Endothelial cell of umbilical vein (primary cell): ENCODE measurements at regions of chr15 and their contacts with region 1.

Region 1: DNA sequence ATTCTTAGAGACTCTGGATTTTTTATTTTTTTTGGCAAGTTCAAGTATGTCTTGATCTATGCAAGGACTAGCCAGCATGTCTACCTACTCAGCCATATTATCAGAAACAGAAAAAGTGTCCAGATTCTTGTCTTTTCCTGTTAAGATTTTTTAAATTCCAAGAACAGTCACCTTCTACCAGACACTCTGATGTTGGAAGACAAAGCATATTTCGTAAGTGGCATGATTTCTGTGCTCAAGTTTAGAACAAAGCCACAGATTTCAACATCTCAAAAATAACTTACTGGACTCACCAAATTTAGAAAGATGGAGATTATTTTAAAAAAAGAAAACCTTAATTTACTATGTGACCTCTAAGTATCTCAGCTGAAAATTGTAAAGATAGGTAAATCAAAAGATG is 61.9 kb downstream of the GOLGA6L7 start:
- DNase-seq: no peak
- H3K4me3 ChIP-seq: no peak overlapping the region
- H3K27ac ChIP-seq: no peak overlapping the region
- H3K4me1 ChIP-seq: no peaks in the 10 kb centered on the region
- H3K27me3 ChIP-seq: peaks cover 4 to 6% of the 10 kb centered on the region in 2 experiments
- CTCF ChIP-seq: no peak
- POLR2A ChIP-seq: no peak

Region 2: DNA sequence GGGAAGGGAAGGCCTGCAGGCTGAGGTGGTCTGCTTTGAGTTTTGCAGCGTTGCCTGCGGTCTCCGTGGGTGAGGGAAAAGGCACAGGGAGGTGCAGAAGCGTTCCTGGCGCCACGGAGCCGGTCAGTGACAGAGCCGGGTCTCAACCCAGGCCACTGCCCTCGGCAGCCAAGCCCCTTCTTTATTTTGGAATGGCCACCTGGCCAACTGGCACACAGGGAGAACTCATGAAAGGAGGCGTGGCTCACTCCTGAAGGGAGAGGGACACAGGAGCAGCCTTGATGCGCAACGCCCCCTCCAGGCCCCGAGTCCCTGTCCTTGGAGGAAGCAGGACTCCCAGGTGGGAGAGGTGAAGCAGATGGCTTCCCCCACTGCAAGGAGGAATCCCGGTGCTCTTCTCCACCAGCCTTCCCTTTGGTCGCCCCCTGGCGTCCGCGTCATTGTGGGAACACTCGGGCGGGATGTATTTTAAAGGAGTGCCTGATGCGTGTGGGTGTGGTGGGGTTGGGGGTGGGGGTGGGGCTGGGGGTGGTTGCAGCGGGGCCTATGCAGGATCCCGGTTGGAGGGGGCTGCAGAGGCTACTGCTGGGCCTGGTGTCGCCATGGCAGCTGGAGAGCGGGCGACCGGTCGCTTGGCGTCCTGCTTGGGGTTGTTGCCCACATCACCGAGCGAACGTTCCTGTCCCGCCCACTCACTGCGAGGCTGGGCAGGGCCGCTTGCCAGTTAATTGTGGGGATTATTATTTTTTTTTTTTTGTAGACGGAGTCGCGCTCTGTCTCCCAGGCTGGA is 131.8 kb after region 1 on chr15:
- CTCF ChIA-PET with region 1: no interaction called
- POLR2A ChIA-PET with region 1: no interaction called
- dilution Hi-C with region 1: no loop called
- intact Hi-C with region 1: loop called (anchors 5 kb)
- DNase-seq: no peak
- H3K4me3 ChIP-seq: no peak overlapping the region
- H3K27ac ChIP-seq: no peak overlapping the region
- H3K4me1 ChIP-seq: no peaks in the 10 kb centered on the region
- H3K27me3 ChIP-seq: no peaks in the 10 kb centered on the region
- CTCF ChIP-seq: peak; percentile 15 to 45
- POLR2A ChIP-seq: no peak